Naive thymus-derived CD4-positive, alpha-beta T cell (primary cell): ENCODE measurements at regions of chrX and their contacts with region 1.

Region 1: DNA sequence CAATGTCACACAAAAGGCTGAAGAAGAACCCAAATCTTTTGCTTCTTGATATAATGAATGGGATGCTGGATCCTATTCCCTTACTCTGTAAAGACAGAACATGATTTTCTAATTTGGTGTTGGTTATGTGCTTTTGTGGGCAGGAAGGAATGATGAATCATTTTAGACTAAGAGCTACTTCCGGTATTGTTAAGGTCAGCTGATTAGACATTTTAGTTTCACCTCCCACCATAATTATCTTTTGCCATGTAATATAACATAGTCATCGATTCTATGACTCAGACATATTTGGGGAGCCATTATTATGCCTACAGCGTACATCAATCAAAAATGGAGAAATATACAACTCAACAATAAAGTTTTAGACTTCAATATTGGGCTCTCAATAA is 265.3 kb downstream of the ZNF674 start:
- DNase-seq: no peak
- ATAC-seq: no peak
- H3K4me3 ChIP-seq: no peak overlapping the region
- H3K4me3 Mint-ChIP-seq: no peak overlapping the region
- H3K27ac ChIP-seq: no peak overlapping the region
- H3K27ac Mint-ChIP-seq: no peak overlapping the region
- H3K4me1 ChIP-seq: no peaks in the 10 kb centered on the region
- H3K4me1 Mint-ChIP-seq: peaks cover 5 to 21% (median 10%) of the 10 kb centered on the region in 7 donors
- H3K27me3 ChIP-seq: no peaks in the 10 kb centered on the region
- H3K27me3 Mint-ChIP-seq: no peaks in the 10 kb centered on the region

Region 2: GRCh38 chrX:46294239-46294638 is 14.3 kb after region 1 on chrX:
- CTCF ChIA-PET with region 1: no interaction called
- POLR2A ChIA-PET with region 1: no interaction called
- intact Hi-C with region 1: no loop called
- DNase-seq: no peak
- ATAC-seq: no peak
- H3K4me3 ChIP-seq: no peak overlapping the region
- H3K4me3 Mint-ChIP-seq: no peak overlapping the region
- H3K27ac ChIP-seq: no peak overlapping the region
- H3K27ac Mint-ChIP-seq: no peak overlapping the region
- H3K4me1 ChIP-seq: no peaks in the 10 kb centered on the region
- H3K4me1 Mint-ChIP-seq: no peaks in the 10 kb centered on the region
- H3K27me3 ChIP-seq: no peaks in the 10 kb centered on the region
- H3K27me3 Mint-ChIP-seq: no peaks in the 10 kb centered on the region

Region 3: GRCh38 chrX:46321676-46322075 is 41.8 kb after region 1 on chrX:
- CTCF ChIA-PET with region 1: no interaction called
- POLR2A ChIA-PET with region 1: no interaction called
- intact Hi-C with region 1: loop called in 1 of 2 experiments (anchors 5 kb)
- DNase-seq: no peak
- ATAC-seq: no peak
- H3K4me3 ChIP-seq: no peak overlapping the region
- H3K4me3 Mint-ChIP-seq: no peak overlapping the region
- H3K27ac ChIP-seq: no peak overlapping the region
- H3K27ac Mint-ChIP-seq: peak overlapping the region in 4 of 9 donors; percentile 12 to 77 (median 40)
- H3K4me1 ChIP-seq: peaks cover 7 to 22% of the 10 kb centered on the region in 2 donors
- H3K4me1 Mint-ChIP-seq: peaks cover 14 to 65% (median 41%) of the 10 kb centered on the region in 7 donors
- H3K27me3 ChIP-seq: no peaks in the 10 kb centered on the region
- H3K27me3 Mint-ChIP-seq: no peaks in the 10 kb centered on the region